ENCODE measurements at regions of chr1 and their contacts with region 1.

Region 1: GRCh38 chr1:89929467-89930063 is 65.3 kb upstream of the ZNF326 start:
- DNase-seq: no peak
- ATAC-seq: peak; percentile 29
- H3K4me3 ChIP-seq: no peak overlapping the region
- H3K27ac ChIP-seq: no peak overlapping the region
- H3K4me1 ChIP-seq: peaks cover 3 to 19% of the 10 kb centered on the region in 2 experiments; a peak in 4 of 5 replicates
- H3K27me3 ChIP-seq: no peaks in the 10 kb centered on the region
- CTCF ChIP-seq: no peak
- EP300 ChIP-seq: no peak
- POLR2A ChIP-seq: no peak
- RAD21 ChIP-seq: no peak

Region 2: DNA sequence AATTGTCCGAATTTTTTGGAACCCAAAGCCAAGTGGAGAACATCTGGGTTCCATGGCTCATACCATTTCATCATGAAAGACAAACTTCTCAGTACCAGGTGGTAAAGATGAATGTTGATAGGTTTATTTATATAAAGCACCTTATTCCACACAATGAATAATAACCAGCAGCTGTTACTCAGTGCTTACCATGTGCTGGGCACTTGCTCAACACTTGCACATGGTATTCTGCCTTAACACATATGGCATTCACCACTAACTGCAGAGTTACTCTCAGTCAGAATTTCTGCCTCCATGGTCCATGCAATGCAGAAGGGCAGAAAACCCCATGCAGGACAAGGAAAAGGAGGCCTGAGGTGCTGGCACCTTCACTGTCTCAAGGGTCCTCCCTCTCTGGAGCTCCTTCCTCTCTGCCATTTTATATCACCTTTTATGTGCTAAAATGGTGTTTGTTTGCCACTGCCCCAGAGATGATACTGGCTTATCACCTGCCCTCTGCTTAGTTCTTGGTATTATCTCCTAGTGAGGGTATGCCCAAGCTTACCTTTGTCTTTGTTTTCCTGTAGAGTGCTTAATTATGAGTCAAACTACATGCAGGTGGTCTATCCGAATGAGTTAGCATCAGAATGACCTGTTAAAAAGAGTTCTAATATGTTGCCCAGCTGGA is 11.3 kb before region 1 on chr1:
- CTCF ChIA-PET with region 1: interaction called, 3 read pairs
- POLR2A ChIA-PET with region 1: interaction called, 15 read pairs
- in situ Hi-C with region 1: no loop called
- intact Hi-C with region 1: no loop called
- DNase-seq: no peak
- ATAC-seq: no peak; the same call in 2 of the 3 replicates
- H3K4me3 ChIP-seq: no peak overlapping the region
- H3K27ac ChIP-seq: no peak overlapping the region
- H3K4me1 ChIP-seq: peaks cover 5 to 19% of the 10 kb centered on the region in 2 experiments
- H3K27me3 ChIP-seq: no peaks in the 10 kb centered on the region
- CTCF ChIP-seq: no peak
- EP300 ChIP-seq: no peak
- POLR2A ChIP-seq: no peak
- RAD21 ChIP-seq: no peak

Measured in K562 (cell line).